Dendritic cell treated with granulocyte-macrophage colony-stimulating factor and Interleukin-4, amounts not matched to agents 40 ng/mL and 50 ng/mL, for 4 days (primary cell): ENCODE measurements at regions of chr3 and their contacts with region 1.

Region 1: GRCh38 chr3:183779896-183780465 is 45.4 kb downstream of the MAP6D1 start:
- H3K4me3 Mint-ChIP-seq: no peak overlapping the region
- H3K27ac Mint-ChIP-seq: peak overlapping the region; percentile 43
- H3K4me1 Mint-ChIP-seq: peaks cover 51% of the 10 kb centered on the region
- H3K27me3 Mint-ChIP-seq: no peaks in the 10 kb centered on the region

Region 2: GRCh38 chr3:183878071-183878470 is 98.1 kb after region 1 on chr3:
- intact Hi-C with region 1: loop called (anchors 5 kb)
- H3K4me3 Mint-ChIP-seq: peak overlapping the region; percentile 51
- H3K27ac Mint-ChIP-seq: peak overlapping the region; percentile 82
- H3K4me1 Mint-ChIP-seq: peaks cover 72% of the 10 kb centered on the region
- H3K27me3 Mint-ChIP-seq: no peaks in the 10 kb centered on the region